Activated CD4-positive, alpha-beta T cell treated with anti-CD3 and anti-CD28 coated beads, Interleukin-2, amount 10 ng/mL, durations not matched to agents 24 days and 14 days (primary cell): ENCODE measurements at regions of chr10 and their contacts with region 1.

Region 1: DNA sequence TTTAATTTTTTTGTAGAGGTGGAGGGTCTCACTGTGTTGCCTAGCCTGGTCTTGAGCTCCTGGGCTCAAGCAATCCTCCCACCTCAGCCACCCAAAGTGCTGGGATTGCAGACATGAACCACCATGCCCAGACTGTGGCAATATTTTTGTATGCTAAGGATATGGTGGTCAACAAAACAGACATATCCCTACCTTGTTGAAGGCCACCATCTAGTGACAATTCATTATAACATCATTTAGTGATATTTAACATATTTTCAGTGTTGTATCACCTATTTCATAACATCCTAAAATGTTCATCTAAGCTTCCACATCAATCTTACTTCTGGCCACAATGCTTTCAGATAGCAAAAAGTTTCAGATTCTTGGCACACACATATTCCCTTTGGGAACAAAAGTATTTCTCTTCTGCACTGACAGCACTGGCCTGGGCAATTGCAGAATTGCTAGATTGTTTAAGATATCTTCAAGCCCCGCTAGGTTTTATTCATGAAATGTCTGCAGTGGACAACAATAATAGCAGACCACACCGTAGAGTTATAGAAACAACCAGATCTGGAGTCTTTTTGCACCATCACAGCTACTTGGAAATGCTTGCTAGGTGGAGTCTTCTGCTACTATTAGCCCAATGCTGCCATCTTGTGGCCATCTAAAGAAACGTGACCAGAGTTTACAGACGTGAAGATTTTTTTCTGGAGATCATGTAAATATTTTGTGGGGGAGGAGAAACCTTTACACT is 58.4 kb downstream of the DNAJC12 start:
- DNase-seq: peak; percentile 93
- H3K4me3 Mint-ChIP-seq: no peak overlapping the region
- H3K27ac Mint-ChIP-seq: peak overlapping the region; percentile 5
- H3K4me1 Mint-ChIP-seq: peaks cover 32% of the 10 kb centered on the region
- H3K27me3 Mint-ChIP-seq: no peaks in the 10 kb centered on the region

Region 2: DNA sequence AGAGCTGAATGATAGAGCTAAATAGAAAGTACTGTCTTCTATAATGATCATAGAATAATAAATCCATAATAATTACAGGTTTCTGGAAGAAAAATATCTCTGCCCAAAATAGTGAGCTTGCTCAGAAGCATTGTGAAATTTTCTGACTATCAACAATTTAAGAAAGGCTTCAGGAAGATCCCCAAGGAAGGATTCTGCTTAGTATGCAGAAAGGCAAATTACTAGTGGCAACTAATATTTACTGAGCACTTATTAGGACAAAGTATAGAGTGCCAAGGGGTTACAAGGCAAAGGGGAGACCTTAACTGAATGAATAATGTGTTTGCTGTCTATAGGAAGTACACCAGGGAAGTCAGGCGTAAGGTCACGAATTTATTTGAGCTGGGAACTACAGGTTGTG is 1011.9 kb before region 1 on chr10:
- intact Hi-C with region 1: loop called (anchors 5 kb)
- DNase-seq: no peak
- H3K4me3 Mint-ChIP-seq: no peak overlapping the region
- H3K27ac Mint-ChIP-seq: no peak overlapping the region
- H3K4me1 Mint-ChIP-seq: no peaks in the 10 kb centered on the region
- H3K27me3 Mint-ChIP-seq: no peaks in the 10 kb centered on the region

Region 3: DNA sequence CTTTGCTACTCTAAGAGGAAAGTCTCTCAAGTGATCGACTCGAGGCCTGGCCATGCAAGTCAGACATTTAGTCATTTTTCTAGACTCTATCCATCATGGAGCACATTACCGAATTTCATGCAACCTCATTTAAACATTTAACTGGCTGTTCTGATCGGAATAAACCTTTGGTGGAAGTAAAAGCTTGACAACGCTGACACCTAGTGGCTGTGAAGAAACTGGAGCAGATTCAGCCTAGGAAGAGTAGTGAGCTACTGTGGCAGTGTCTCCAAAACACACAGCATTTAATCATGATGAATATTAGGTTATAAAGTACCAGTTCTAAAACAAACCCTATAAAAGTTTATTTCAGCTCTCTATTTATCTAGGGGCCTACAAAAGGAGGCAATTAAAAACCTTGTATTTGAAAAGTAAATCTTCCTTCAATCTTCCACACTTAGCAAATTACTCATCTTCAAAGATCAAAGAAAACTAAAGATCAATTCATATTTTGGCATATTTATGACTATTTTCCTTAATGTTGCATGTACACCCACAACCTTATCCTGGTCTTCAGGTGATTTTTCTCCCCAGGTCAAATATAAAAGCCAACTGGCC is 258.6 kb before region 1 on chr10:
- intact Hi-C with region 1: loop called (anchors 5 kb)
- DNase-seq: peak; percentile 80
- H3K4me3 Mint-ChIP-seq: no peak overlapping the region
- H3K27ac Mint-ChIP-seq: no peak overlapping the region
- H3K4me1 Mint-ChIP-seq: peaks cover 2% of the 10 kb centered on the region
- H3K27me3 Mint-ChIP-seq: no peaks in the 10 kb centered on the region

Region 4: DNA sequence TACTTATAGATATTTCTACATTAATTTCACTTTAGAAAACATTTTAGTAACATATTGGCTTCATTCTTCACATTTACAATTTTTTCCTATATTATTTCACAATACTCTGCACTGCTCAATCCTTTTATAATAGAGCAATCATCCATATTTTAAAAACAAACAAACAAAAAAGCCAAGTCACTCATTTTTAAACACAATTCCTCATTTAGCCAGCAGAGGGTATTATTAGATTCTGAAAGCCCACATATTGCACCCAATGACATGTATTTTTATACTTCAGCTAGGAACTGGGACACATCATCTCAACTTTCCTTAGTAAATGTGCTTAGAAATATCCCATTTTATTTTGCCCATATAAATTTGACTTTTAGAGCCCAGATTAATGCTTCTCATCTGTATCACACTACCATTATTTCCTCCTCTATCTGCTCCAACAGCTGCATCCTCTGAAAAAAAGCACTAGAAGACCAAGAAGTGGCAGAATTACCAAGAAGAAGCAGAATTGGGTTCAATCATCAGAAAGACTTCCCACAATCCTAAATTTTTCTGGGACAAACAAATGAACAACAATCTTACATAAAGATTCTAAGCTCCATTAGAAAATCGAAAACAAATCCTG is 113.1 kb before region 1 on chr10:
- intact Hi-C with region 1: loop called (anchors 1 kb)
- DNase-seq: no peak
- H3K4me3 Mint-ChIP-seq: no peak overlapping the region
- H3K27ac Mint-ChIP-seq: no peak overlapping the region
- H3K4me1 Mint-ChIP-seq: no peaks in the 10 kb centered on the region
- H3K27me3 Mint-ChIP-seq: peaks cover 22% of the 10 kb centered on the region

Region 5: GRCh38 chr10:67764012-67764822 is 15.4 kb before region 1 on chr10:
- intact Hi-C with region 1: loop called (anchors 2 kb)
- DNase-seq: peak; percentile 99
- H3K4me3 Mint-ChIP-seq: peak overlapping the region; percentile 85
- H3K27ac Mint-ChIP-seq: peak overlapping the region; percentile 92
- H3K4me1 Mint-ChIP-seq: peaks cover 23% of the 10 kb centered on the region
- H3K27me3 Mint-ChIP-seq: peaks cover 8% of the 10 kb centered on the region

Region 6: GRCh38 chr10:68353537-68353936 is 573.9 kb after region 1 on chr10:
- intact Hi-C with region 1: no loop called
- DNase-seq: no peak
- H3K4me3 Mint-ChIP-seq: no peak overlapping the region
- H3K27ac Mint-ChIP-seq: no peak overlapping the region
- H3K4me1 Mint-ChIP-seq: no peaks in the 10 kb centered on the region
- H3K27me3 Mint-ChIP-seq: no peaks in the 10 kb centered on the region